ENCODE measurements at regions of chr2 and their contacts with region 1.

Region 1: DNA sequence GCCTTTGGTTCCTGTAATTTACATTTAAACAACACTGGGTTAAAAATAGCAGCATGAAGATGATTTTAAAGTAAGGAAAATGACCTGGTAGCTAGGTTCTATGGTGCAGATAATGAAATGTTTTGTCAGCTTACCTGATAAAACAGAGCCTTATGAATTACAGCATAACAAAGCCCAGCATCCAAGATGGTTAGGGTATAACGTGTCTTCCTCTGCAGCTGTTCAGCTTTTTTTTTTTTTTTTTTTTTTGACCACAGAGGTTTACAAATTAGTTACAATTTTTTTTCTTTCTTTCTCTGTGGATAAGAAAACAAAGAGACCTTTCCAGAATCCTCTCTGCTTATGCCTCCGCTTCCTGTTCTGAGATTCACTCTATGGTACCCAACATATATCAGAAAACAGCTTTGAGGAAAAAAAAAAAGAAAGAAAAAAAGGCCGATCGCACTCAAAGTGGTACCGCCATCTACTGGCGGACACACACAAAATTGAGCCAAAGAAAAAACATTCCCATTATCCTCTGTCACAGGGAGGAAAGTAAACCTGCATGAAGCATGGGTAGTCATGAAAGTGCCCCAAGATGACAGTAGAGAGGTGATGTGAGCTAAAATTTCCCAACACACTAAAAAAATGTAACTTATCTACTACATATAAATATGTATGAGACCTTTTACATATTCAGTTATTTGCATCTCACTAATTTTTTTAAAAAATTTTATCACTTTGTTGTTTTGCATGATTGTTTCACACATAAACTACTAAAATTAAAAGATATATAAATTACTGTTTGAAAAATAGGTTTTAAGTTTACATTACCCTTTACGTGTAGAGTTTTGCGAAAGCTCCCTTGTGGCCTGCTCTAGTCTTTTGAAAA is at the start of gene SCN3A:
- DNase-seq: peak; percentile 46

Region 2: GRCh38 chr2:165015052-165015642 is 188.8 kb before region 1 on chr2:
- CTCF ChIA-PET with region 1: interaction called, 59 read pairs
- POLR2A ChIA-PET with region 1: no interaction called
- DNase-seq: peak; percentile 68

Region 3: GRCh38 chr2:165227571-165227970 is 23.6 kb after region 1 on chr2:
- CTCF ChIA-PET with region 1: no interaction called
- POLR2A ChIA-PET with region 1: no interaction called
- DNase-seq: no peak

Measured in HEK293T (cell line).